Thyroid gland (tissue), 4 donors: ENCODE measurements at regions of chr7 and their contacts with region 1.

Region 1: GRCh38 chr7:116180302-116180701 is 30.0 kb upstream of the TES start:
- DNase-seq: no peak
- H3K4me3 ChIP-seq: no peak overlapping the region
- H3K27ac ChIP-seq: peak overlapping the region in 1 of 3 donors; percentile 5
- H3K4me1 ChIP-seq: no peaks in the 10 kb centered on the region
- H3K27me3 ChIP-seq: no peaks in the 10 kb centered on the region
- CTCF ChIP-seq: peak; percentile 54 to 93 (median 80)
- POLR2A ChIP-seq: no peak

Region 2: DNA sequence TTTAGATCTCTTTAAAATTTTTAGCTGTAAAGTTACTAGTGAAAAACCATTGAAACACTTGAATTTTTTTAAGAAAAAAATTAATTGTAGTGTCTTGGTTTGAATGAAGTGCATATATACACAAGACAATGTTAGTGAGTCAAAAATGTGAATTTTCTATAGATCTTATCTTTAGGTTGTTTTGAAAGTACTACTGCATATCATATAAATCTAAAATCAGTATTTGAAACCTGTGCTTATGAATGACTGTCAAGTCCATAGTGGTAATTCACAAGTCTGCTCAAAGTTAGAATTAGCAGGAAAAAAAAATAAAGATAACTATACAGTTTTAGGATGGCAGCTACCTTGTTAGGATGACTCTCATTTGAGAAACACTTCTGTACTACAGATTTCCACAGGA is 55.1 kb after region 1 on chr7:
- intact Hi-C with region 1: loop called (anchors 2 kb)
- DNase-seq: no peak
- H3K4me3 ChIP-seq: no peak overlapping the region
- H3K27ac ChIP-seq: peak overlapping the region in 2 of 3 donors; percentile 43 to 60
- H3K4me1 ChIP-seq: peaks cover 74 to 78% of the 10 kb centered on the region in 2 donors
- H3K27me3 ChIP-seq: no peaks in the 10 kb centered on the region
- CTCF ChIP-seq: no peak
- POLR2A ChIP-seq: no peak